SK-N-SH (cell line): ENCODE measurements at regions of chr10 and their contacts with region 1.

Region 1: GRCh38 chr10:122142641-122143237 is 128.4 kb upstream of the BTBD16 start:
- DNase-seq: peak; percentile 73
- H3K4me3 ChIP-seq: no peak overlapping the region; a peak in 1 of 4 replicates
- H3K27ac ChIP-seq: peak overlapping the region; percentile 95 to 100
- H3K4me1 ChIP-seq: peaks cover 33 to 65% of the 10 kb centered on the region in 2 experiments
- H3K27me3 ChIP-seq: no peaks in the 10 kb centered on the region
- CTCF ChIP-seq: peak; percentile 77
- EP300 ChIP-seq: no peak
- RAD21 ChIP-seq: peak; percentile 78

Region 2: GRCh38 chr10:121974535-121975294 is 168.0 kb before region 1 on chr10 and contains the start of gene NSMCE4A:
- CTCF ChIA-PET with region 1: interaction called, 13 read pairs
- POLR2A ChIA-PET with region 1: interaction called, 14 read pairs
- DNase-seq: peak; percentile 95
- H3K4me3 ChIP-seq: peak within 1 kb of the TSS; percentile 82 to 98
- H3K27ac ChIP-seq: peak within 1 kb of the TSS; percentile 81 to 94
- H3K4me1 ChIP-seq: peaks cover 0 to 13% of the 10 kb centered on the region in 2 experiments; a peak in 2 of 4 replicates
- H3K27me3 ChIP-seq: no peaks in the 10 kb centered on the region
- CTCF ChIP-seq: no peak
- EP300 ChIP-seq: no peak; a peak in 1 of 4 replicates
- RAD21 ChIP-seq: no peak
- polyA plus RNA-seq, gene NSMCE4A: 28.5 and 35.6 TPM in 2 replicates

Region 3: DNA sequence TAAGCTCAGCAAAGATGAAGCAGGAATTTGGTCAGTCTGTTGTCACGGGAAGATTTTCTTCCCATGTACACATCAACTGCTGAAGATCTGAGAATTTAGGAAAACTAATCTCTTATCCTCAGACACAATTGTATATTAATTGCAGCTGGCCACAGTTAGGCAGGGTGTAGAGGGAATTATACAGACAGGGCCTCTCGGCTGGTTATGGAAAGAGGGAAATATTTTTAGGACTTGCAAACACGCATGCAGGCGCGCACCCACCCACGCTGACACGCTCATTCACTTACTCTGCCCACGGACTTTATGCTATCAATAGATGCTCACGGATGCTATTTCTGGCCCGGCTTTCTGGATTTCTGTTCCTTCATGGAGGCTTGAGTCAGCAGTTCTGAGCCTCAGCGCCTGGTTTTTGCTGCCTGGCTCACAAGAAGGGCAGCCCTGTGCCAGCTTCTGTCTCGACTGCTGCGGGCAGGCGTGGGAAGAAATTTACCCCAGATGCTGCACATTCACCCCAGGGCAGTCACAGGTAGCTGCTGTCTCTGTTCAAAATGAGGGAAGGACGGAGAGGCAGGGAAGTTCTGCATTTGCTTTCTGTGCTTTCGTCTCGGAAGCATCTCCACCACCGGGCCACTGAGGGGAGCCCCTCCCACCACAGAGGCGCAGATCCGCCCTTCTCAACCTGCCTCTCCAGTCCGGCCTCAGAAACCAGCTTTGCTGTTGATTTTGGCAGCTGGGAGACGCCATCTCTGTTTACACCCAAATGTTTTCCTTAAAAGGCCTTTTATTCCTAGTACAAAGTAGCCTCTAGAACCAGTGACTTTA is 12.0 kb after region 1 on chr10:
- CTCF ChIA-PET with region 1: interaction called, 54 read pairs
- POLR2A ChIA-PET with region 1: no interaction called
- DNase-seq: no peak
- H3K4me3 ChIP-seq: no peak overlapping the region; a peak in 1 of 4 replicates
- H3K27ac ChIP-seq: peak overlapping the region; percentile 42 to 58
- H3K4me1 ChIP-seq: peaks cover 0 to 25% of the 10 kb centered on the region in 2 experiments; a peak in 2 of 4 replicates
- H3K27me3 ChIP-seq: no peaks in the 10 kb centered on the region
- CTCF ChIP-seq: no peak
- EP300 ChIP-seq: no peak
- RAD21 ChIP-seq: no peak

Region 4: GRCh38 chr10:122199070-122199469 is 56.3 kb after region 1 on chr10:
- CTCF ChIA-PET with region 1: no interaction called
- POLR2A ChIA-PET with region 1: no interaction called
- DNase-seq: no peak
- H3K4me3 ChIP-seq: no peak overlapping the region
- H3K27ac ChIP-seq: no peak overlapping the region
- H3K4me1 ChIP-seq: no peaks in the 10 kb centered on the region
- H3K27me3 ChIP-seq: no peaks in the 10 kb centered on the region
- CTCF ChIP-seq: no peak
- EP300 ChIP-seq: no peak
- RAD21 ChIP-seq: no peak

Region 5: DNA sequence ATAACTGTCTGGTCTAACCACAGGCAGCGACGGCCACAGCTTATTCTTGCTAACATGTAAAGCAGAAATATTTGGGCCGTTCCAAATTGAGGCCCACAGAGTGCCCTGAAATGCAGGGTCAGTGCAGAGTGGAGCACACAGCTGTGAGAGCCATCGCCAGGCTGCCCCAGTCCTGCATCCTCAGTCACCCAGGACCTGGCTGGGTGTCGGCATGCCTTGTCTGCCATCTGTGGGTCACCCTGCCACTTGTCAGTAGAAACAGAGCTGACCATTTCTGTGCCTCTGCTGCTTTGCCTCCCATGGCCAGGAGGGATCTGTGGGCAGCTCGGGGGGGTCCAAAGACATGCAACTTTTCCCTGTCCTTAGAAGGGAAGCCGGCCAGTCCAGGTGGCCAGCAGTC is 71.0 kb after region 1 on chr10:
- CTCF ChIA-PET with region 1: interaction called, 24 read pairs
- POLR2A ChIA-PET with region 1: interaction called, 7 read pairs
- DNase-seq: peak; percentile 78
- H3K4me3 ChIP-seq: no peak overlapping the region
- H3K27ac ChIP-seq: peak overlapping the region in 1 of 2 experiments; percentile 83; a peak in 2 of 4 replicates
- H3K4me1 ChIP-seq: peaks cover 0 to 44% of the 10 kb centered on the region in 2 experiments; a peak in 2 of 4 replicates
- H3K27me3 ChIP-seq: no peaks in the 10 kb centered on the region
- CTCF ChIP-seq: no peak
- EP300 ChIP-seq: no peak
- RAD21 ChIP-seq: peak; percentile 74

Region 6: GRCh38 chr10:122267849-122268737 is 125.4 kb after region 1 on chr10:
- CTCF ChIA-PET with region 1: interaction called, 28 read pairs
- POLR2A ChIA-PET with region 1: interaction called, 3 read pairs
- DNase-seq: peak; percentile 86
- H3K4me3 ChIP-seq: no peak overlapping the region; a peak in 1 of 4 replicates
- H3K27ac ChIP-seq: no peak overlapping the region
- H3K4me1 ChIP-seq: no peaks in the 10 kb centered on the region; a peak in 1 of 4 replicates
- H3K27me3 ChIP-seq: no peaks in the 10 kb centered on the region
- CTCF ChIP-seq: peak; percentile 91
- EP300 ChIP-seq: no peak
- RAD21 ChIP-seq: peak; percentile 61